BJ (cell line): ENCODE measurements at regions of chr3 and their contacts with region 1.

Region 1: DNA sequence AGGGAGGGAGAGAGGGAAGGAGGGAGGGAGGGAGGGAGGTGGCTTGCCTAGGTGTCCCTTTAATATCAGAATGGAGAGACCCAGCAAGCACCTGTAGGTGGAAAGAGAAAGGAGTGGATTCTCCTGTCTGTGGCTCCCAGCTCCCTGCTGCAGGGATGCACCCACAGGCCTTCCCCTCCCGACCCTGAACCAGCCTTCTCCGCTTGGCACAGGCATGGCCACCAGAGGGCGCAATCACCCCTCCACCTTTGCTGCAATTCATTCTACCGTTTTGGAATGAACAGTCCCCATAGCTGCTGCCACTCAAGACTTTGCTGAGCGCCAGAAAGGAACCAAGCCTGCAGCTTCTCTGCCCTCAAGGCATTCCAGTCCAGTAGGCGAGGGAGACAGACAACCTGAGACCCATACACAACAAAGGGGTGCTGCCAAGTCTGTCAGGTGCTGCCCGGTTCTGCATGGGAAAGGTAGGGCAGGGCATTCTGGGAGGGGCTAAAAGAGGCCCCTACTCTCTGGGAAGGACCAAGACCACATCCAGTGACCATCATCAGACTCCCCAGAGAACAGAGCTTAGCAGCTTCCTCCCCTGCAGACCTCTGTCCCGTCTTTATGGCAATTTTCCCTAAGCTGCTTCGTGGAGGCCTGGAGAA is 4.9 kb downstream of the TLR9 start:
- DNase-seq: no peak
- H3K4me3 ChIP-seq: no peak overlapping the region
- H3K27me3 ChIP-seq: no peaks in the 10 kb centered on the region
- CTCF ChIP-seq: peak; percentile 97

Region 2: DNA sequence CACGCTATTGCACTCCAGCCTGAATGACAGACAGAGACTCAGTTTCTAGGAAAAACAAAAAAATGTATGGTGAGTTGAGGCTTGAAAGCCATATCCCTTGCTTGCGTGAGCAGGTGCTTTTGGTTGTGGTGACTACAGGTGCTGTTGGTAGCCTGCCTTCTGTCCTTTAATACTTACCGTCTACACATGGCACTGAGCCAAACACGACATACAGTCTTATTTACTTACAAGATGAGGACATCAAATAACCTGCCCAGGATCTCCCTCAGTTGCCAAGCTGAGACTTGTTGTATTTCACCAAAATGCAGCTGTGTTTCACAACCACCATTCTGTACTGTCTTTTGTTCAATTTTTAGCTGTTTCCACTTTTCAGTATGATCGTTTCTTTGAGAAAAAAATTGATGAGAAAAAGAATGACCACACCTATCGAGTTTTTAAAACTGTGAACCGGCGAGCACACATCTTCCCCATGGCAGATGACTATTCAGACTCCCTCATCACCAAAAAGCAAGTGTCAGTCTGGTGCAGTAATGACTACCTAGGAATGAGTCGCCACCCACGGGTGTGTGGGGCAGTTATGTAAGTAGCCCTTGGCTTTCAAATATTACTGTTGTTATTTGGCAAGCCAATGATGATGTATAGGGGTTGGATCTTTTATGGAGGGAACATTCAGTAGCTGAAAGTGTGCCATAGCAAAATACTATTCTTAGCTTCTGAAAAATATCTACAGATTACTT is 16.0 kb before region 1 on chr3:
- CTCF ChIA-PET with region 1: interaction called, 57 read pairs
- POLR2A ChIA-PET with region 1: interaction called, 5 read pairs
- DNase-seq: no peak
- H3K4me3 ChIP-seq: no peak overlapping the region
- H3K27me3 ChIP-seq: no peaks in the 10 kb centered on the region
- CTCF ChIP-seq: no peak

Region 3: DNA sequence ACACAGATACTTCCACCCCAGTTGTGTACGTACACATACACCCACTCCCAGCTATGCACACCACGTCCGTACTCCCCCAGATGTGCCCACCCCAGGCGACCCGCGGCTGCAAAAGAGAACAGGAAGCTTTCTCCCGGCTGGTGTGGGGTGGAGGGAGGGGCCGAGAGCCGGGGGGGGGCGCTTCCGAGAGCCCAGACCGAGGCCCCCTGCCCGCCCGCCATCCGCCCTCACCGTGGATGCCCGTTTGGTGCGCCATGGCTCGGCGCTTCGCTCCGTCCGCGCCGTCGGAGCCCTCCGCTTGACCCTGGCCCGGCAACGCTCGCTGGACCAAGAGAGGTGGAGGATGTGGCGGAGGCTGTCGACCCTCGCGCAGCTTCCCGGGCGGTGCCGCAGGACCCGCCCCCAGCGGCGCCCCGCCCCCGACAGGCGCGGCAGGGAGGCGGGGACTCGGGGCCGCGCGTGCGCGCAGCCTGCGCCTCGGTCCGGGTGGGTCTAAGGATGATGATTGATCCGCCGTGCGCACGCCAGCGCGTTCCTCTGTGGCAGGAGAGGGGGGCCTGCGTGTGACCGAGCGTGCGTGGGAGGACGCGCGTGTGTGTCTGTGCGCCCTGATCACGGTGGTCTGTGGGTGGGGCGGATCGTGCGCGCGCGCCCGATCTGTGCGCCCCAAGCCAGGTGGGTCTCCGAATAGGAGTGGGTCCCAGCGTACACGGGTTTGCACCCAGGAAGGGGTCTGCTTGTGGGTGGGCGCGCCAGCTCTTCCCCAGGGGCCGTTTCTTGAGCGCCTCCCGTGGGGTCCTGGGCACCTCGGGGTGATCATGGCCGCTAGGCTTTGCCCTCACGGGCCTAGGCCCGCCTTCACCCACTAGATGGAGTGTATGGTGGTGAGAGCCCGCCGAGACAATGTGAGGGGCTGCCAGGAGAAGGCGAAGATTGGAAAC is 18.5 kb after region 1 on chr3 and contains the start of gene TWF2:
- CTCF ChIA-PET with region 1: interaction called, 131 read pairs
- POLR2A ChIA-PET with region 1: no interaction called
- DNase-seq: no peak
- H3K4me3 ChIP-seq: peak within 1 kb of the TSS; percentile 90
- H3K27me3 ChIP-seq: no peaks in the 10 kb centered on the region
- CTCF ChIP-seq: peak; percentile 49
- polyA plus RNA-seq, gene TWF2: 109 and 205 TPM in 2 replicates

Region 4: DNA sequence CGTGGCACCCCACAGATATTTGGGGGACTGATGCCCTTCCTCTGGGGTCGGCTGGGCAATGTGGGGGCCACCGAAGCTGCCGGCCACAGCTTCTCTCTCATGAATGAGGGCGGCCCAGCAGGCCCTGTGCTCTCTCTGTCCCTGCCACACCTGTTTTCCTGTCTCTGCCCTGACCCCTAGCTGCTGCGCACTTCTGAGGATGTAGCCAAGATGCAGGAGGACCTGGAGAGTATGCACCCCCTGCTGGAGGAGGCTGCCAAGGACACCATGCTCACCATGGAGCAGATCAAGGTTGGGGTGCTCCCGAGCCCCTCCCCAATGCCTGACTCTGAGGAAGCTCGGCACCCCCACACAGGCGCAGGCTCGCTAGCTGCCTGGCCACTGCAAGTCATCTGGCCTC is 164.7 kb after region 1 on chr3:
- CTCF ChIA-PET with region 1: interaction called, 11 read pairs
- POLR2A ChIA-PET with region 1: no interaction called
- DNase-seq: no peak
- H3K4me3 ChIP-seq: no peak overlapping the region
- H3K27me3 ChIP-seq: no peaks in the 10 kb centered on the region
- CTCF ChIP-seq: peak; percentile 64